A549 (cell line): ENCODE measurements at regions of chr2 and their contacts with region 1.

Region 1: DNA sequence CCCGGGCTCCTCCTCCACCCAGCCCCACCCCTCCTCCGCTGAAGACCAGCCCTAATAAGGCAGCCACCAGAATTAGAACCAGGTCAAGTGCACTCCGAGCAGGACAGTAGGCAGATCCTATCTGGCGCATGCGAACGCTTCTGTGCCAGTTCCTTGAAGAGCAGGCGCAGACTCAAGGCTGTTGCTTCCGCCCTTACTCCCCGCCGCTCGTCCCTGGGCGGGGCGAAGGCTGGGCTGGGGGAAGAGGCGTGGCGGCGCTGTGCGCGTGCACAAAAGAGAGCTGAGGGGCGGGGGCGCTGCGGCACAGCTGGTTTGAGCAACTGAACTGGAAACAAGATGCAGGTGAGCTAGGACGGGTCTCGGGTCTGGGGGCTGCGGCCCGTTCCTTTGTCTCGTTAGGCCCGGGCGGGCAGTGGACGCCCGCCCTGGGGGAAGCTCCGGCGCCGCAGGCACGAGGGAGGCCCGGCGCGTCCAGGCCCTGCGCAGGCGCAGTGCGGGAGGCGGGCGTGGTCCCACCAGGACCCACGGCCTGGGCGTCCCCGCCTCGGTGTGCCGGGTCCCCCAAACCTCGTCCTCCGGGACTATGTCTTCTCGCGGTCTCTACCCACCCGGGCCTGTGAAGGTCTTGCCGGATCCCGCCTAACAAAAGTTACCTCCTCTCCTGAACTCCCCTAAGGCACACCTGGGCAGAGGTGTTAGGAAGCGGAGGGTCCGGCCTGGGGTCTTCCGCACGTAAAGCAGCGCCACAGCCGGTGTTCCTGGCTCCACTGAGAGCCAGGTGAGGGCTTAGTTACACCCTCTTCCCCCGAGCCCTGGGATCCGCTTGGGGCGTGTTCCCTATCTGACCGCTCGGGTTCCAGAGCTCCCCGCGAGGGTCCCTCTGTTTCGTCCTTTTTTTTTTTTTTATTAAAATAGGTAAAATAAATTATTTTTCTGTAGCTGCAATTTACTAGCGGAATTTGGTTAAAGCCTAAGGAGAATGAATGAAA is at the start of gene PDCL3:
- DNase-seq: peak; percentile 93 to 99
- ATAC-seq: peak; percentile 97
- H3K4me3 ChIP-seq: peak within 1 kb of the TSS; percentile 83
- H3K27ac ChIP-seq: peak within 1 kb of the TSS; percentile 86 to 95
- H3K4me1 ChIP-seq: peaks cover 18% of the 10 kb centered on the region
- CTCF ChIP-seq: peak; percentile 12; the same call in 2 of the 3 replicates
- EP300 ChIP-seq: no peak
- POLR2A ChIP-seq: peak; percentile 73
- RAD21 ChIP-seq: no peak
- polyA plus RNA-seq, gene PDCL3: 47.8 and 63.1 TPM in 2 replicates

Region 2: GRCh38 chr2:100291120-100291970 is 271.7 kb before region 1 on chr2:
- CTCF ChIA-PET with region 1: no interaction called
- POLR2A ChIA-PET with region 1: interaction called, 25 read pairs
- DNase-seq: peak; percentile 90 to 99
- ATAC-seq: peak; percentile 91 to 93
- H3K4me3 ChIP-seq: peak overlapping the region; percentile 22
- H3K27ac ChIP-seq: peak overlapping the region; percentile 98 to 99
- H3K4me1 ChIP-seq: peaks cover 47% of the 10 kb centered on the region
- CTCF ChIP-seq: no peak
- EP300 ChIP-seq: peak; percentile 86 to 93; a peak in 4 of 5 replicates
- POLR2A ChIP-seq: no peak
- RAD21 ChIP-seq: peak; percentile 18 to 47; a peak in 3 of 5 replicates

Region 3: GRCh38 chr2:100416935-100417710 is 145.9 kb before region 1 on chr2 and contains the start of gene CHST10:
- CTCF ChIA-PET with region 1: interaction called, 3 read pairs
- POLR2A ChIA-PET with region 1: interaction called, 12 read pairs
- DNase-seq: peak; percentile 59 to 63
- ATAC-seq: peak; percentile 95 to 98
- H3K4me3 ChIP-seq: peak within 1 kb of the TSS; percentile 79
- H3K27ac ChIP-seq: peak within 1 kb of the TSS; percentile 86 to 97
- H3K4me1 ChIP-seq: peaks cover 8% of the 10 kb centered on the region; the same call in 1 of the 3 replicates
- CTCF ChIP-seq: no peak
- EP300 ChIP-seq: no peak
- POLR2A ChIP-seq: peak; percentile 71
- RAD21 ChIP-seq: no peak; a peak in 1 of 5 replicates
- polyA plus RNA-seq, gene CHST10: 24.0 and 29.5 TPM in 2 replicates

Region 4: DNA sequence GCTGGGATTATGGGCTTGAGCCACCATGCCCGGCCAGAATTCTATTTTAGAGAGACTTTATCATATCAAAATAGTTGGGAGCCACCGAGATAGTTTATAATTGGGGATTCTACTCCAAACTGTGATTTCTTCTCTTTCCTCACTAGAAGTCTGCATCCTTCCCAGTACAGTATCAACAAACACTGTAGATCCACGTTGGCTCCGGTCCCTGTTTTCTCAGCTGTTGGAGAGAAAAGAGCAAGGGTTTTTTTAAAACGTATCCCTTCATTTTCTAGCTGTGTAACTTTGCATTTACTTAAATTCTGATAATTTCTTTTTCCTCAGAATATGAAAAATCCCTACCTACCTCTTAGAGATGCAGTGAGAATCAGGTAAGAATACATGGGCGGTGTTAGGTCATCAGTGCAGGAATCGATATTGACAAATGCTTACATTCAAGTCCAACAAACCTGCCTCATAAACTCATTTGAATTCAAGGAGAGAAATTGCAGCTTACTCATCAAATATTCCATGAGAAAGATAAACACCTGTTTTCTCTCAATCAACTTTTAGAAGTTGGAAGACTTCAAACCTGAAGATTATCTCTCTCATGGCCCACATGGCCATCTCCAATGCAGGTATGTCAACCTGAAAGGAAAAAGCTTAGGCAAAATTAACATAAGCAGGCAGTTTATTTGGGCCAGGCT is 18.0 kb before region 1 on chr2:
- CTCF ChIA-PET with region 1: no interaction called
- POLR2A ChIA-PET with region 1: interaction called, 15 read pairs
- DNase-seq: no peak
- ATAC-seq: no peak
- H3K4me3 ChIP-seq: no peak overlapping the region
- H3K27ac ChIP-seq: no peak overlapping the region
- H3K4me1 ChIP-seq: no peaks in the 10 kb centered on the region
- CTCF ChIP-seq: no peak
- EP300 ChIP-seq: no peak
- POLR2A ChIP-seq: no peak
- RAD21 ChIP-seq: no peak

Region 5: GRCh38 chr2:100682536-100682935 is 119.5 kb after region 1 on chr2:
- CTCF ChIA-PET with region 1: no interaction called
- POLR2A ChIA-PET with region 1: no interaction called
- DNase-seq: no peak
- ATAC-seq: no peak
- H3K4me3 ChIP-seq: no peak overlapping the region
- H3K27ac ChIP-seq: no peak overlapping the region
- H3K4me1 ChIP-seq: no peaks in the 10 kb centered on the region
- CTCF ChIP-seq: no peak
- EP300 ChIP-seq: no peak
- POLR2A ChIP-seq: no peak
- RAD21 ChIP-seq: no peak

Region 6: DNA sequence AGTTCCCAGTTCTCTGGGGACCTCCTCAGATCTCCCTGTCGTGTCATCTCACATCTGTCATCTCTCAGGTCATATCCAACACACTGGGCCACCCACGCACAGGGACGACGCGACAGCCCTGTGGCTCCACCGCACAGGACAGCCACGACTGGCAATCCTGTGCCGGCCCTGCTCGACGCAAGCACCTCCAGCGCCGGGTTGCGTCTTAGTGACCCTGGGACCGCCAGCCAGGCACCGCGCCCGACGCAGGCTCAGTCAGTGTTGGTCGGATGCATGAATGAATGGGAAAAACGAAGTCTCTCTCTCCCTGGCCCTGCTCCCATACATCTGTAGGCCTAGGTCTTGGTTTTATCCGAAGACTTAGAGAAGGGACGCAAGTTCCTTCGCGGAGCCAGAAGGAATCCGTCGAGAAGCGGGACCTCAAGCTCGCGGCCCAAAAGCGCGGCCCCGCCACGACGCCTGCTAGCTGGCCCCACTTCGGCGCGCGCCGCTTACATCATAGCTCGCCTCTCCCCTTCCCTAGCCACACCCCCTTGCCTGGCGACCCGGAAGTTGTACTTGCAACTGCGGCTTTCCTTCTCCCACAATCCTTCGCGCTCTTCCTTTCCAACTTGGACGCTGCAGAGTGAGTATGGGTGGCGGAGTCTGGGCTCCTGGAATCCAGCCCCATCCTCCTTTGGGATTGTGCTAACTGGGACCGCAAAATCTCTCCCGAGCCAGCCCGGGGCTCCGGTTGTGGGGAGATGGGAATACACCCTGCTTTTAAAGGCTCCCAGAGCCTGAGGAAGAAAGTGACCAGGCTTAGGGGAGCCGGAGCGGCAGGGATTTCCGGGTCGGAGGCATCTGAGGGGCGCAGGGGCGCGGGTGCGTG is 438.9 kb after region 1 on chr2 and contains the start of gene RPL31:
- CTCF ChIA-PET with region 1: no interaction called
- POLR2A ChIA-PET with region 1: interaction called, 14 read pairs
- DNase-seq: peak; percentile 94 to 98
- ATAC-seq: peak; percentile 85 to 88
- H3K4me3 ChIP-seq: peak within 1 kb of the TSS; percentile 71
- H3K27ac ChIP-seq: peak within 1 kb of the TSS; percentile 86 to 98
- H3K4me1 ChIP-seq: peaks cover 39% of the 10 kb centered on the region
- CTCF ChIP-seq: no peak
- EP300 ChIP-seq: no peak
- POLR2A ChIP-seq: peak; percentile 97
- RAD21 ChIP-seq: no peak
- polyA plus RNA-seq, gene RPL31: 2,064 and 3,103 TPM in 2 replicates